Tibial artery (tissue), 4 donors: ENCODE measurements at regions of chr2 and their contacts with region 1.

Region 1: GRCh38 chr2:68467077-68467960 is at the starts of genes APLF and FBXO48:
- DNase-seq: peak; percentile 98 to 99
- H3K4me3 ChIP-seq: peak within 1 kb of the TSS; percentile 73 to 91
- H3K27ac ChIP-seq: peak within 1 kb of the TSS; percentile 87 to 88
- H3K4me1 ChIP-seq: peaks cover 0 to 19% (median 11%) of the 10 kb centered on the region in 4 donors
- H3K27me3 ChIP-seq: no peaks in the 10 kb centered on the region
- CTCF ChIP-seq: peak in 1 of 2 experiments; percentile 14

Region 2: DNA sequence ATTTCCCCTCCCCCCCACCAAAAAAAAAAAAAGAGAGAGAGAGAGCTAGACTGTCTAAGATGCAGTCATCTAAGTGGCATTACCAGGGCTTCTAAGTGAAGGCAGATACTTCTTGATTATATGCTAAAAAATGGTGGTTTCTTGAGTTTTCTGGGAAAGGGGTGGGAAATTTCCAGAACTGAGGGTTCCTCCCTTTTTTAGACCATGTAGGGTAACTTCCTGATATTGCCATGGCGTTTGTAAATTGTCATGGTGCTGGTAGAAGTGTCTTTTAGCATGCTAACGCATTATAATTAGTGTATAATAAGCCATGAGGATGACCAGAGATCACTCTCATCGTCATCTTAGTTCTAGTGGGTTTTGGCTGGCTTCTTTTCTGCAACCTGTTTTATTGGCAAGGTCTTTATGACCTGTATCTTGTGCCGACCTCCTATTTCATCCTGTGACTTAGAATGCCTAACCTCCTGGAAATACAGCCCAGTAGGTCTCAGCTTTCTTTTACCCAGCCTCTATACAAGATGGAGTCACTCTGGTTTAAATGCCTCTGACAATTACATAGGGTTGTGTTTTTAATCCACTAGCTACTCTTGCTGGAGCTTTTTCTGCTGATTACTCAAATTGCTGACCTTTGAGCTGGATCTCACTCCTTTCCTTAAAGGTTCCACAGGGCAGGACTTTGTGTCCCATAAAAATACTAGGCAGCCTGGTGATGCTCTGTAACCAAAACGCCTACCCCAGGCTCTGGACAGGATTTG is 145.6 kb after region 1 on chr2:
- intact Hi-C with region 1: no loop called
- DNase-seq: no peak
- H3K4me3 ChIP-seq: no peak overlapping the region
- H3K27ac ChIP-seq: no peak overlapping the region
- H3K4me1 ChIP-seq: no peaks in the 10 kb centered on the region
- H3K27me3 ChIP-seq: no peaks in the 10 kb centered on the region
- CTCF ChIP-seq: no peak

Region 3: DNA sequence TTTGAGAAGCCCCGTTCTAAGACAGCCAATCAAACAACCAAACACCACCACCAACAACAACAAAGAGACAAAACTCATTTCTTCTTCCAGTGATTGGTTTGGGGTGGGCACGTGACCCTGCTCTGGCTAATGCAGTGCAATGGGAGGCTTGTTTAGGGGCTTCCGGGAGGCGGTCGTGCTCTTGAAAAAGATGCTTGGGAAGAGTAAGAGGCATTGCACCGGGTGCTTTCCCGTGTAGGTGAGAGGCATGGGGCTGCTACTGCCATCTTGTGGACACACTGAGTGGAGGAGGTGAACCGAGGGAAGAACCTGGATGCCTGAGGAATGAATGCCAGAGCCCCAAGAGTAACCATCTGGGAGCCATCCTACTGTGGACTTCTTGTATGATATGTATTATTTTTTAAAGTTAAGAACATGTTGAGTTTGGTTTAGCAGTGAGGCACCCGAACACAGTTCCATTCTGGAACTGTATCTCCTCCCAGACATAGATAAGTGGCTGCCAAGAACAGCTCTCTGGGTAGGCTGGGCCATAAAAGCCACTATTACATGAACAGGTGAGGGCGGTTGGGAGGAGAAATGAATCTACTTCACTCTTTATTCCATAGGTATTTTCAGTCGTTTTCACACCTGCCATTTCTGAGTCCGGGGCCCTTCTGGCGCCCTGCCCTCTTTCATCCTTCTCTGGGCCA is 248.2 kb after region 1 on chr2:
- intact Hi-C with region 1: loop called (anchors 5 kb)
- DNase-seq: peak in 1 of 2 donors; percentile 30
- H3K4me3 ChIP-seq: no peak overlapping the region
- H3K27ac ChIP-seq: no peak overlapping the region
- H3K4me1 ChIP-seq: no peaks in the 10 kb centered on the region
- H3K27me3 ChIP-seq: peaks cover 0 to 3% of the 10 kb centered on the region in 2 donors
- CTCF ChIP-seq: peak; percentile 39 to 53

Region 4: GRCh38 chr2:68925295-68925896 is 458.1 kb after region 1 on chr2:
- intact Hi-C with region 1: loop called (anchors 10 kb)
- DNase-seq: no peak
- H3K4me3 ChIP-seq: no peak overlapping the region
- H3K27ac ChIP-seq: no peak overlapping the region
- H3K4me1 ChIP-seq: no peaks in the 10 kb centered on the region
- H3K27me3 ChIP-seq: no peaks in the 10 kb centered on the region
- CTCF ChIP-seq: peak; percentile 89 to 90

Region 5: DNA sequence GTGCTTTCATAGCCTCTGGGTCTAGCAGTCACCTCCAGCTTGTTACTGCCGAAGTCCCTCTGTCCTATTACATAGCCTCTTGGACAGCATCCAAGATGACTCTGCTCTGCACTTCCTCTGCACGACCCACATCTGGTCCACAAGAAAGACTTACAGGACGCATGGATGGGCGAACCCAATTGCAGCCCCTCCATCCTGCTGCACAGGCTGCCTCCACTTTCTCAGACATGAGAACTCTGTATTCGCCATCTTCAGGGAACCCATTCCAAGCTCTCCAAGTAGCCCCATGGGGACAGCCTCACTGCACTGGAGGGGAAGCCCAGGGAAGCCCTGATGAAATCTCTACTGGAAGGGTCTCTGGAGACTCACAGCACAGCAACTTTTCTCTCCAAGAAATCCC is 747.6 kb after region 1 on chr2:
- intact Hi-C with region 1: no loop called
- DNase-seq: peak in 1 of 2 donors; percentile 48
- H3K4me3 ChIP-seq: no peak overlapping the region
- H3K27ac ChIP-seq: peak overlapping the region; percentile 35 to 67
- H3K4me1 ChIP-seq: peaks cover 0 to 75% (median 41%) of the 10 kb centered on the region in 4 donors
- H3K27me3 ChIP-seq: no peaks in the 10 kb centered on the region
- CTCF ChIP-seq: no peak